ENCODE measurements at regions of chr5 and their contacts with region 1.

Region 1: DNA sequence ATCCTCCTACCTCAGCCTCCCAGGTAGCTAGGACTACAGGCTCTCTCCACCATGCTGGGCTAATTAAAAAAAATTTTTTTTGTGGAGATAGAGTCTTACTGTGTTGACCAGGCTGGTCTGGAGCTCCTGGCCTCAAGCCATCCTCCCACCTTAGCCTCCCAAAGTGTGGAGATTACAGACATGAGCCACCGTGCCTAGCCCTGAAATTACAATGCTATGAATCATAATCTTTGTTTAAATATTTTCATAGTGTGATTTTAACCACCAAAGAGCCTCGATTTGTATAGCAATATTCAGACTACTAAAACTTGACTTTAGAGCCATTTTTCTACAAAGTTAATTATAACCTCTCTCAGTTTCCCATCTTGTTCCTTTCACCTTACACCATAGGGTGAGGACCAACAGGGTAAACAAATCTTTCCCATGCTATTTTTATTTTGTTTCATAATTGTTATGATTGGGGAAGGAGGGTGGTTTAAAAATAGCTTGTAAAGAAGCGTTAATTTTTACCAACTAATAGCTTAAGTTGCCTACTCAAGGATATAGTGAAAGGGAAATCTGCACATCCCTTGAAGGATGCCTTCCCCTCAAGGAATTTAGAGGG is 32.7 kb downstream of the UBE2D2 start:
- DNase-seq: no peak
- ATAC-seq: no peak
- H3K4me3 ChIP-seq: no peak overlapping the region
- H3K4me3 Mint-ChIP-seq: no peak overlapping the region
- H3K27ac ChIP-seq: peak overlapping the region in 1 of 2 donors; percentile 59
- H3K27ac Mint-ChIP-seq: peak overlapping the region; percentile 37
- H3K4me1 ChIP-seq: peaks cover 40 to 56% of the 10 kb centered on the region in 2 donors
- H3K4me1 Mint-ChIP-seq: peaks cover 56% of the 10 kb centered on the region
- H3K27me3 ChIP-seq: no peaks in the 10 kb centered on the region
- H3K27me3 Mint-ChIP-seq: no peaks in the 10 kb centered on the region
- CTCF ChIP-seq: no peak

Region 2: DNA sequence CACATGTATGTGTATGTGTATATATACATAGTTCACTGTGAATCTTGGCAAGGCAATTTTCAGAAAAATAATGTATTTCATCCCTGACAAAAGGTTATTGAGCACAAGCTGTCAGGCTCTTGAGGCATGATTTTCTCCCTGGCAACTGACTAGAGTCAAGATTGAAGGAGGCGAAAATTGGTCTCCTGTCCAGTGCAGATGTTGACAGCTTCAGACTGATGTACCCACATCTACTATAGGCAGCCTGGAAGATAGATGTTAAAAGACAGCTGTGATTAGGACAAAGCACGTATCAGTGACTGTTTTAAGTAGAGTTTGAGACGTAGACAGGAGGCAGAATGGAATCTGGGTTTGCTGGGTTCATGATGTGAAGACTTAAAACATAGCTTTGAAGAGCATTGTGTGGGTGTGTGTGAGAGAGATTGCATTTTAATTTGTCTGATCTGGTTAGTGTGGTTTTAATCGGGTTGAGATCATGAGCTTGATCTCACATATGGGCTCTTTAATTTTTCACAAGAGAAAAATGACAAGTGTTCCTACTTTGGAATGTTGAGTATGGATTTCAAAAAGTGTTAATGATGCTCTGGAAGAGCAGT is 801.5 kb before region 1 on chr5:
- CTCF ChIA-PET with region 1: no interaction called
- POLR2A ChIA-PET with region 1: no interaction called
- intact Hi-C with region 1: no loop called
- DNase-seq: no peak
- ATAC-seq: no peak
- H3K4me3 ChIP-seq: no peak overlapping the region
- H3K4me3 Mint-ChIP-seq: no peak overlapping the region
- H3K27ac ChIP-seq: no peak overlapping the region
- H3K27ac Mint-ChIP-seq: no peak overlapping the region
- H3K4me1 ChIP-seq: peaks cover 3 to 4% of the 10 kb centered on the region in 2 donors
- H3K4me1 Mint-ChIP-seq: peaks cover 8% of the 10 kb centered on the region
- H3K27me3 ChIP-seq: no peaks in the 10 kb centered on the region
- H3K27me3 Mint-ChIP-seq: no peaks in the 10 kb centered on the region
- CTCF ChIP-seq: no peak

Region 3: GRCh38 chr5:139605887-139606286 is 12.1 kb after region 1 on chr5:
- CTCF ChIA-PET with region 1: interaction called, 3 read pairs
- POLR2A ChIA-PET with region 1: interaction called, 5 read pairs
- intact Hi-C with region 1: loop called (anchors 2 kb)
- DNase-seq: peak; percentile 40
- ATAC-seq: peak; percentile 81
- H3K4me3 ChIP-seq: no peak overlapping the region
- H3K4me3 Mint-ChIP-seq: peak overlapping the region; percentile 70
- H3K27ac ChIP-seq: peak overlapping the region; percentile 12 to 54
- H3K27ac Mint-ChIP-seq: peak overlapping the region; percentile 74
- H3K4me1 ChIP-seq: peaks cover 13 to 23% of the 10 kb centered on the region in 2 donors
- H3K4me1 Mint-ChIP-seq: peaks cover 29% of the 10 kb centered on the region
- H3K27me3 ChIP-seq: no peaks in the 10 kb centered on the region
- H3K27me3 Mint-ChIP-seq: no peaks in the 10 kb centered on the region
- CTCF ChIP-seq: no peak

Region 4: DNA sequence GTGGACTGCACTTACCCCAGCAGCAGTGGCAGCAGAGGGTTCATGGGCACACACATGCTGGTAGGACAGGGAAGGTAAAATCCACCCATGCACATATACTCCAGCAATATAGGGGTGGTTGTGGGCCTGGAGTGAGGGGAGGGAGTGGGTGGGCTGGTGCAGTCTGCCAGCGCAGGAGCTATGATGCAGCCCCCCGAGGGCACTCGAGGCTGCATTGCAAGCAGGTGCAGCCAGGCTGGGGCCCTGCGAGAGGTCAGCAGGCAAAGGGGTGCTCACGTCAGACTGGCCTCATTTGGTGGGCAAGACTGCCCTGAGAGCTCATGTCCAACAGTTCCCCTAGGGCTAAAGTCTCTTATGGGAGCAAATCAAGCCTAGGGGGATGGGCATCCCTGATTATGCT is 1159.7 kb after region 1 on chr5:
- CTCF ChIA-PET with region 1: no interaction called
- POLR2A ChIA-PET with region 1: no interaction called
- intact Hi-C with region 1: no loop called
- DNase-seq: no peak
- ATAC-seq: no peak
- H3K4me3 ChIP-seq: no peak overlapping the region
- H3K4me3 Mint-ChIP-seq: no peak overlapping the region
- H3K27ac ChIP-seq: no peak overlapping the region
- H3K27ac Mint-ChIP-seq: no peak overlapping the region
- H3K4me1 ChIP-seq: no peaks in the 10 kb centered on the region
- H3K4me1 Mint-ChIP-seq: no peaks in the 10 kb centered on the region
- H3K27me3 ChIP-seq: peaks cover 0 to 6% (median 0%) of the 10 kb centered on the region in 4 experiments
- H3K27me3 Mint-ChIP-seq: no peaks in the 10 kb centered on the region
- CTCF ChIP-seq: no peak

Measured in B cell (primary cell).